A673 (cell line): ENCODE measurements at regions of chr11 and their contacts with region 1.

Region 1: DNA sequence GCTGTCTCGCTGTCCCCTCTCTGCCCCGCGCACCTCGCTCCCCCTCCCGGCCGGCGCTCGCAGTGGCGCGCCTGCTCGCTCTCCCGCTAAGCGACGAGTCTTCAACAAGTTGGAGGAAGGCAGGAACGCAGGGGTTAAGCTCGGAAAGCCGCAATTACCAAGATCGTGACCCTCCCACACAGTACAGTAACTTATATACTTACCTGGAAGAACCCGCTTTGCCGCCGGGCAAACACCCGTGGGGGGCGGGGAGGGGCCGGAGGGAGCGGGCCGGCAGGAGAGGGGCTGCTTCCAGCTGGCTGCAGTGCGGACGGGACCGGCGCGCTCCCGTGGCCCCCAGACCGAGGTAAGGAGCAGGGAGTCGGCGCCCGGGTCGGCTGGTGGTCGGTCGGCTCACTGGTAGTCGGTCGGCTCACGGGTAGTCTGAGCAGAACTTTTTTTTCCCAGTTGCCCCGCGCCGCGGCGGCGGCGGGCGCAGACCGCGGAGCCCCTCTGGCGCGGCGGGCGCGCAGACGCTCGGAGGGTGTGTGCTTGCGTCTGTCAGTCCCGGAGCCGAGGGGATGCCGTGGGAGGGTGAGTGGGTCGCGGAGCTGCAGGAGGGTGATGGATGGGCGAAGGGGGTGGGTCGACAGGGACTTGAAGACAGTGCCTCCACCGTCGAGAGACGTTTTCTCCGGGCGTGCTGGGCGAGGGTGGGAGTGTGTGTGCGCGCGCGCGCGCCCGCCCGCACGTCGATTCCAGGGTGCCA is 101.2 kb upstream of the HSD17B12 start:
- DNase-seq: peak; percentile 88
- H3K4me3 ChIP-seq: peak overlapping the region; percentile 58
- H3K27ac ChIP-seq: no peak overlapping the region
- H3K4me1 ChIP-seq: peaks cover 53% of the 10 kb centered on the region
- H3K27me3 ChIP-seq: peaks cover 98% of the 10 kb centered on the region
- CTCF ChIP-seq: peak; percentile 64

Region 2: DNA sequence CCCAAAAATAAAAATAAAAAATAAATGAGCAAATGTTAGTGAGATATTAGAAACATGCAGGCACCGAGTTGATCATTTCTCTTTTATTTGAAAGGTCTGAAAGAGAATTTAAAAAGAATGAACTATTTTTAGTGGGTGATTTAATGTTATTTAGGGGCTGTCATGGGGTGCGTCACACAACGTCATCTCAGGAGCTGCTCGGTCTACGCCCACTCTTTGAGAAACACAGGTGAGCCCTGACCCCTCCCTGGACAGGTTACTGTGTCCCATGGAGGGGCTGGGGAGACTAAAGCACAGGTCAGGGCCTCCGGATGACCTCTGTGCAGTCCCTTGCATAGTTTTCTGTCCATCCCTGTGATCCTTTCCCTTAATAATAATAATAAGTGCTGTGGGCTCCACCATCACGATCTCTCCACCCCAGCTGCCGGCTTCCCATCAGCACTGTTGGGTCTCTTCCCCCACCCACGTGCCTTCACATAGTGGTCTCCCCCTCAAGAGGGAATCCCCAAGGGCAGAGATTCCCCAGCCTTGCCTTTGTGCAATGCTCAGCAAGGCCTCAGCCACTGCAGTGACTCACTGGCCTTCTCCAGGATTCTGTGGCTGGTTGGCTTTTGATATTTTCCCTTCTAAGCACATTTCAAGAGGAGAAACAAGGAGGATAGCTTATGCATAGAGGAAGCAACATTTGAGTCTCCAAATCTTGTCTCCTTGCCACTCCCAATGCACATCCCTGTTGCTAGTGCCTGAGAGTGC is 60.8 kb before region 1 on chr11:
- CTCF ChIA-PET with region 1: no interaction called
- POLR2A ChIA-PET with region 1: no interaction called
- intact Hi-C with region 1: no loop called
- DNase-seq: no peak
- H3K4me3 ChIP-seq: no peak overlapping the region
- H3K27ac ChIP-seq: no peak overlapping the region
- H3K4me1 ChIP-seq: no peaks in the 10 kb centered on the region
- H3K27me3 ChIP-seq: peaks cover 1% of the 10 kb centered on the region
- CTCF ChIP-seq: no peak

Region 3: DNA sequence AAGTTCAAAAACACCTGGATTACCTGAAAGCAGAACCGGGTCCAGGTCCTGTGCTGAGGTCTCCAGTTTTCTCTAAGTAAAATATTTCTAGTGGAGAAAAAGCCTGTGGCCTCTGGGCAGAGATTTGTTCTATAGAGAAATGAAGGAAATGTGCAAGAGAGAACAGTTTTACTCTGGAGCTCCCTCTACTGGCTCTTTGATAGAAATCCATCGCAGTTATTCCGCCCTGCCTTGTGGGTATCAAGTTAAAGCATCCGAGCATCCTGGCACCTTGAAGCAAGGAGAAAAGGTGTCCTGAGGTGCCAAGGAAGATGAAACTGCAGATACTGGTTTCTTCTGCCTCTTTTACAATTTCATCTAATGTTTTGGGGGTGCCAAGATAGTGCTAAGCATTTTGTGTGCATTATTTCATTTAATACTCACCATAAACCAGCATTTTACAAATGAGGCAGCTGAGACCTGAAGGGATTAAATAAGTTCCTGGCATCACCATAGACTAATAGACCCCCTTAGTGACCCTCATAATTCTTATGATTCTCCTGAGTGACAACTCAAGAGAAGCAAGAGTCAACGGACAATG is 11.9 kb before region 1 on chr11:
- CTCF ChIA-PET with region 1: interaction called, 12 read pairs
- POLR2A ChIA-PET with region 1: no interaction called
- intact Hi-C with region 1: no loop called
- DNase-seq: peak; percentile 85
- H3K4me3 ChIP-seq: no peak overlapping the region
- H3K27ac ChIP-seq: no peak overlapping the region
- H3K4me1 ChIP-seq: no peaks in the 10 kb centered on the region
- H3K27me3 ChIP-seq: peaks cover 79% of the 10 kb centered on the region
- CTCF ChIP-seq: peak; percentile 98

Region 4: DNA sequence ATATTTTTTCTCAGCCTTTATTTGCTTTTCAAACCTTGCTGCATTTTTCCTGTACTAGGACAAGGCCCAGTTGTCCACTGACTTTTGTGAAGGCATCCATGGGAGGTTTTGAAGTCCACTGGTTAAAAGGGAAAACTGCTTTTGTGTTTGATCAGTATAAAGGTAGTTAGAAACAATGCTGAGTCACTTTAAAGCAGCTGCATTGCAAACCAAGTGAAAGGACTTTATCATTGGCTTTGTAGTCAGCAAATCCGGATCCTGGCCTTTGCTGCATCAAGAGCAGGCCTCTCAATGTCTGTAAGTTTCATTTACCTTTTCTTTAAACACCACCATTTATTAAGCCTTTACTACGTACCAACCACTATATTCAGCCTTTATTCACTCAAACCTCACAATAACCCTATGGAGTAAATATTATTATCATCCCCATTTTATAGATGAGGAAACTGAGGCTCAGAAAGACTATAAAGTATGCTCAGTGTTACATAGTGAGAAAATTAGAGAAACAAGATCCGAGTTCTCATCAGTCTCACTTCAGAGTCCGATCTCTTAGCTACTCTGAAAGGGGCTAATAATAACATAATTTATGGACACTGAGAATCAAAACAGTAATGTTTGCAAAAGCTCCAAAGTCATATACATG is 40.6 kb after region 1 on chr11:
- CTCF ChIA-PET with region 1: no interaction called
- POLR2A ChIA-PET with region 1: no interaction called
- intact Hi-C with region 1: loop called (anchors 5 kb)
- DNase-seq: no peak
- H3K4me3 ChIP-seq: no peak overlapping the region
- H3K27ac ChIP-seq: no peak overlapping the region
- H3K4me1 ChIP-seq: peaks cover 3% of the 10 kb centered on the region
- H3K27me3 ChIP-seq: peaks cover 73% of the 10 kb centered on the region
- CTCF ChIP-seq: no peak

Region 5: GRCh38 chr11:43680521-43681400 is 101.4 kb after region 1 on chr11 and contains the start of gene HSD17B12:
- CTCF ChIA-PET with region 1: interaction called, 6 read pairs
- POLR2A ChIA-PET with region 1: no interaction called
- intact Hi-C with region 1: loop called (anchors 5 kb)
- DNase-seq: peak; percentile 100
- H3K4me3 ChIP-seq: peak within 1 kb of the TSS; percentile 62
- H3K27ac ChIP-seq: peak within 1 kb of the TSS; percentile 93
- H3K4me1 ChIP-seq: peaks cover 37% of the 10 kb centered on the region
- H3K27me3 ChIP-seq: no peaks in the 10 kb centered on the region
- CTCF ChIP-seq: 0 out of 2 replicates have a peak, but pooled peaks have one; percentile 31
- total RNA-seq, gene HSD17B12: 305 and 307 TPM in 2 replicates

Region 6: DNA sequence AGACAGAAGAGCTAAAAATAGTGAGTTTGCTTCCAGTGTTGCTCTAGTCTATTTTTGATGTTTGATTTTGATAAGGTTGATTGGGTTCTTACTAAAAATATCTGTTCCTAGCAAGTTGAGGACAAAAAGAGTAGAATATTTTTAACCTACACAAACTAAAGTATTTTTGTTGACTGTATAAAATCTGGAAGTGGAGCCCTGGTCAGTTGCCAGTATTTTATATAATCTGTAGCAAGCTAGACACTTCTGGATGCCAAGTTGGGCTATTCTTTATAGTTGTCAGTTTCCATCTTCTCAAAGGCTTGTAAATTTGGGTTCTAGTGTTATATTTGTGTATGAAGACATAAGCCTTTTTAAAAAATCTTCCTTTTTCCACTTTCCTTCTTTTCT is 157.9 kb after region 1 on chr11:
- CTCF ChIA-PET with region 1: no interaction called
- POLR2A ChIA-PET with region 1: interaction called, 10 read pairs
- intact Hi-C with region 1: no loop called
- DNase-seq: no peak
- H3K4me3 ChIP-seq: peak overlapping the region; percentile 24
- H3K27ac ChIP-seq: peak overlapping the region; percentile 97
- H3K4me1 ChIP-seq: peaks cover 47% of the 10 kb centered on the region
- H3K27me3 ChIP-seq: no peaks in the 10 kb centered on the region
- CTCF ChIP-seq: no peak

Region 7: GRCh38 chr11:43810929-43811596 is 231.7 kb after region 1 on chr11:
- CTCF ChIA-PET with region 1: interaction called, 6 read pairs
- POLR2A ChIA-PET with region 1: no interaction called
- intact Hi-C with region 1: loop called (anchors 1 kb)
- DNase-seq: peak; percentile 84
- H3K4me3 ChIP-seq: no peak overlapping the region
- H3K27ac ChIP-seq: no peak overlapping the region
- H3K4me1 ChIP-seq: peaks cover 11% of the 10 kb centered on the region
- H3K27me3 ChIP-seq: no peaks in the 10 kb centered on the region
- CTCF ChIP-seq: peak; percentile 98

Region 8: GRCh38 chr11:43852057-43852636 is 272.8 kb after region 1 on chr11:
- CTCF ChIA-PET with region 1: interaction called, 19 read pairs
- POLR2A ChIA-PET with region 1: no interaction called
- intact Hi-C with region 1: no loop called
- DNase-seq: peak; percentile 92
- H3K4me3 ChIP-seq: no peak overlapping the region
- H3K27ac ChIP-seq: no peak overlapping the region
- H3K4me1 ChIP-seq: no peaks in the 10 kb centered on the region
- H3K27me3 ChIP-seq: no peaks in the 10 kb centered on the region
- CTCF ChIP-seq: peak; percentile 100

Region 9: DNA sequence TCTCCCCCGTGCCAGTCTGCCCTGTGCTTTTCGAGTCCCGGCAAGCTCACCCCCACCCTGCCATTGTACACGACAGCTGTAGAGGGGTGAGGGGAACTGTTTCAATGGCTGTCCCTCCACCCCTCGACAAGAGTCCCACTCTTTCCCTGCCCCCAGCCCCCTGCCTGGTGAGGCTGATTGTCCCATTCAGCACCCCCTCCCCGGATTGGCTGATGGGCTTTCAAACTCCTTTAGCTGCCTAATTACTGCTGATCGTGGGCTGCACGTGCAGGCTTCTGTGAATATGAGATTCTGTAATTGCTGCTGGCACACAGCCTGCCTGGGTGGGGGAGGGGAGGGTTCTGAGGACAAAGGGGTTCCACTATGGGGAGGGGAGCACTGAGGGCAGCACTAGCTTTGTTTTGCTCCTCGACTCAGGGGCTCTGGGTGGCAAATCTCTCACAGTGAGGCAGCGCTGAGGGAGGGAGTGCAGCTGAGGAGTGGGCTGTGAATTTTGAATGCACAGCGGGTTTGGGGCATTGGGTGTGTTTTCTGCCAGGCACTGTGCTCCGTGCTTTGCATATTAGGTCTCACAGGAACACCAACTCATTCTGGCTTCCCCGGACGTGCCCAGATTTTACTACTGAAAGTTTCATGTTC is 425.8 kb after region 1 on chr11:
- CTCF ChIA-PET with region 1: no interaction called
- POLR2A ChIA-PET with region 1: no interaction called
- intact Hi-C with region 1: no loop called
- DNase-seq: peak; percentile 68
- H3K4me3 ChIP-seq: no peak overlapping the region
- H3K27ac ChIP-seq: no peak overlapping the region
- H3K4me1 ChIP-seq: peaks cover 15% of the 10 kb centered on the region
- H3K27me3 ChIP-seq: no peaks in the 10 kb centered on the region
- CTCF ChIP-seq: no peak